ENCODE measurements at regions of chr17 and their contacts with region 1.

Region 1: GRCh38 chr17:18916816-18917500 is 35.0 kb upstream of the SLC5A10 start:
- DNase-seq: no peak
- ATAC-seq: no peak

Region 2: DNA sequence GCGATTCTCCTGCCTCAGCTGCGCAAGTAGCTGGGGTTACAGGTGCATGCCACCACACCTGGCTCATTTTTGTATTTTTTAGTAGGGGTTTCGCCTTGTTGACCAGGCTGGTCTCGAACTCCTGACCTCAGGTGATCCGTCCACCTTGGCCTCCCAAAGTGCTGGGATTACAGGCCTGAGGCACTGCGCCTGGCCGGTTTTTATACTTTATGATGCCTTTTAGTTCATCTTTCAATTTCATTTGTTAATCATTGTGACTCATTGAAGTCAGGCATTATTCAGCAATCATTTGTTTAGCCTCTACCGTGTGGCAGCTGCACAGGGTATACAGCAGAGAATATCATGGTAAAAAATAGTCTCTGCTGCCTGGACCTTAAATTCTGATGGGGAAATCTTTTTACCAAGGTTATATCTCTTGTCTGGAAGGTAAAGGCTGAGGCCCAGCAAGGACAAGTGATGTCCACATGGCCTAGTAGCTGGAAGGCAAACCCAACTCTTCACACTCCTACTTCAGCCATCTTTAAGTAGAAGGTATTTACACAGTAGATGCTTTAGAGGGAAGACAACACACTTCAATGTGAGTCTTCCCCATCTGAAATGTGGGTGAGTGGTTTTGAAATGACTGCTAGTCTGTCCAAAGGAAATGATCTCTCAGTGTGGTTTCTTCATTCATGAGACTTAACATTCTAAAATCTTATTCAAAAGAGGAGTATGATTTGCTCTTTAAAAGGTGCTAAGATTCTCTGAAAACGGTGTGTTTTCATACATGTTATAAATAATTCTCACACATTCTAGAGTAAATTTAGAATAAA is 56.6 kb before region 1 on chr17:
- intact Hi-C with region 1: loop called (anchors 10 kb)
- DNase-seq: no peak
- ATAC-seq: no peak

Region 3: GRCh38 chr17:18960803-18961511 is 44.0 kb after region 1 on chr17:
- intact Hi-C with region 1: loop called (anchors 10 kb)
- DNase-seq: peak; percentile 89
- ATAC-seq: peak; percentile 95